ENCODE measurements at regions of chr2 and their contacts with region 1.

Region 1: DNA sequence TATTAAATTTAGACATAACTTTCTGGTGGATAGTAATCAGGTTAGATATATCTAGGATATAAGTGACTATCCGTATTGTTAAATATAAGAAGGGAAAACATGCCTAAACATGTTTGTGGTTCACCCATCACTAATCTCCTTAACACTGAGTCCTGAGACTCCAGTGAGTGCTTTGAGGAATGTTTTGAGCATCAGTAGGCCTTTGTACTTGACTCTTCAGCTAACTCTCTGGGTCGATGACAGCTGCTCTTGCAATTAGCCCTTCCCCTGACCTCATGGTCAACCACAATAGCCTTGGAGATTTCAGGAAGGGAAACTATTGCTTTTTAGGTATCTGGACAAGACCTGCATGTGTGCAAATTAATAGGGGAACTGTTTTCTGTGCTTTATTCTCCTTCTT is 716.8 kb downstream of the EPHA4 start:
- DNase-seq: peak in 4 of 5 donors; percentile 33 to 49 (median 41)
- ATAC-seq: peak; percentile 93 to 96 (median 94)
- H3K4me3 ChIP-seq: no peak overlapping the region
- H3K27ac ChIP-seq: no peak overlapping the region
- H3K4me1 ChIP-seq: peaks cover 0 to 24% (median 7%) of the 10 kb centered on the region in 12 donors
- H3K27me3 ChIP-seq: no peaks in the 10 kb centered on the region
- CTCF ChIP-seq: no peak
- POLR2A ChIP-seq: no peak

Region 2: DNA sequence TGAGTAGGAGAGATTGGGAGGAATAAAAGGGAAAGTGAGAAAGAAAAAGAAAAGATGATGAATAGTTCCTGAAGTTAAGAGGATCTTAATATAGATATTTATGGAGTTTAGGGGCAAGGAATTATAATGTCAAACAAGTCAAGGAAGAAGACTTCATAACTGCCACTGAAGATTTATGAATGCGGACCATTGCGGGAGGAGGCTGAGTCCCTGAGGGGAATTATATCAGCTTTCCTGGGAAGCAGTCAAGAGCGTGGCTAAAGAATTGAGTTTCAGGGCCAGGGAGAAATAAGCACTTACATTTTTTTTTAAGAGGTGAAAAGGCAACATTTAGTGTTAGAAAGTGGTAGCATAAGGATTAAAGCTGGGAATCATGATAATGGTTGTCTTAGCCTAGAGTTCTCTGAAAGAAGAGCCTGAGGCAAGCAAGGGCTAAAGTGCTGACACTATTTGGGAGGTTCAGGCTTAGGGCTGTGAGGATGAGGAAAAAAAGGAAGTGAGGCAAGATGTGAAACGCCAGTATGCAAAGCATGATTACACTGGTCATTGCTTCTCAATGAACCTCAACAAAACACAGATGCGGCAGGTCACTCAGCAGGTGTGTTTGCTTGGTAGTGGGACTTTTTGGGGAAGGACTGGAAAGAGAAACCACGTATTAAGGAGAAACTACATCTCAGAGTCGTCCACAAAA is 1010.8 kb before region 1 on chr2:
- intact Hi-C with region 1: loop called in 1 of 10 experiments (anchors 5 kb)
- DNase-seq: no peak
- ATAC-seq: no peak
- H3K4me3 ChIP-seq: no peak overlapping the region
- H3K27ac ChIP-seq: no peak overlapping the region
- H3K4me1 ChIP-seq: no peaks in the 10 kb centered on the region
- H3K27me3 ChIP-seq: no peaks in the 10 kb centered on the region
- CTCF ChIP-seq: no peak
- POLR2A ChIP-seq: no peak

Region 3: DNA sequence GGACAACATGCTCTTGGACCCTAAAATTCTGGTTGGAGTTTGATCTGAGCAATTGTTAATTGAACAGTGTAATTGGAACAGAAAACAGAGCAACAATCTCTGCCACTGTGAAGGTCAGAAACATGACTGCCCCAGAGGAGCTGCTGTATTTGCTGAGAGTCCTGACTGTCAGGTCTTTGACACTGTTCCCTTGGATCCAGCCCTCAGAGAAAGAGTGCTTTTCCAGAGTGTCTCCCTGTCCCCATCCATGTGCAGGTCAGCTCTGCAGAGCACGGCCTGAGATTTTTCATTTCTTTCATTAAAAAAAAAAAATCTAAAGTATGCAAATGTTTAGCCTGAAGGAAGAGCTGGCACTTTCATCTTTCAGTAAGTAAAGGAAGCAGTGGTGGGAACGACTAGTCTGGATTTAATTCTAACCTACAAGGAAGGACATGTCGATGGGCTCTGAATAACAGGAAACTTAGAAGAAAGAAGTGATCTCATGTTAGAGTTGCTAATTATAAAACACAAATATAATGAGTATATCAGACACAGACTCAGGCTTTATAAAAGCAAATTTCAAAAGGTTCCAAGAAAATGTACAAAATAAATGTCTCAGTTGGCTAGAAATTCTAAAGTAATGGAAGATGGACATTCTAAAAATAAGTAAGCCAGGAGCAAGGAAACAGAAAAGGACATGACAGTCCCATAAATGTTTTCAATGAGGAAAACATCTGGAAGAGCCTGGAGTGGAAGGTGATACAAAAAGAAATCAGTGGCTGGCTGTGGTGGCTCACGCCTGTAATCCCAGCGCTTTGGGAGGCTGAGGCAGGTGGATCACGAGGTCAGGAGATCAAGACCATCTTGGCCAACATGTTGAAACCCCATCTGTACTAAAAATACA is 159.7 kb before region 1 on chr2:
- intact Hi-C with region 1: loop called in 1 of 10 experiments (anchors 10 kb)
- DNase-seq: no peak
- ATAC-seq: peak in 2 of 4 donors; percentile 41 to 78
- H3K4me3 ChIP-seq: no peak overlapping the region
- H3K27ac ChIP-seq: peak overlapping the region in 3 of 12 donors; percentile 13 to 22 (median 17)
- H3K4me1 ChIP-seq: peaks cover 0 to 6% (median 0%) of the 10 kb centered on the region in 12 donors
- H3K27me3 ChIP-seq: no peaks in the 10 kb centered on the region
- CTCF ChIP-seq: no peak
- POLR2A ChIP-seq: no peak

Measured in heart left ventricle (tissue), 16 donors.